Colonic mucosa (tissue), 4 donors: ENCODE measurements at regions of chr5 and their contacts with region 1.

Region 1: GRCh38 chr5:90529194-90529938 is at the start of gene LYSMD3:
- DNase-seq: peak; percentile 98
- H3K4me3 ChIP-seq: peak within 1 kb of the TSS; percentile 75
- H3K27ac ChIP-seq: peak within 1 kb of the TSS; percentile 84
- H3K4me1 ChIP-seq: peaks cover 18% of the 10 kb centered on the region
- H3K27me3 ChIP-seq: no peaks in the 10 kb centered on the region
- CTCF ChIP-seq: no peak
- total RNA-seq, gene LYSMD3: 20.4 to 32.0 TPM

Region 2: DNA sequence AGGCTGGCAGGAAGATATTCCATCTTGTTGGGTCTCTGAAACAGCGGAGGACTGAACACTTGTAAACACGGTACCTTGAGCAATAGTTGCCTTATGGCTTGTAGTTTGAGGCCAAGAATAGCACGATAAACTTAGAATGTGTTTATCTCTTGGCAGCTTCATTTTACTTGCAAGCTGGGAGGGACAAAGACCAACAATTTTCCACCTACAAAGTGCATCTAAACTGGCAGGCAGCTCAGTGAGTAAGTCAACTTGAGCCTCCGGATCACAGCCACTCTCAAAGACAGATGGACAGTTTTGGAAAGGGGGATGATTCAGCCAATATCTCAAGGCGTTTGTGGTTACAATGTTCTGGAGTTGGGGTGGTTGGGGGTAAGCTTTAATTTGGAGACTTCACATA is 772.4 kb before region 1 on chr5:
- intact Hi-C with region 1: no loop called
- DNase-seq: no peak
- H3K4me3 ChIP-seq: no peak overlapping the region
- H3K27ac ChIP-seq: no peak overlapping the region
- H3K4me1 ChIP-seq: no peaks in the 10 kb centered on the region
- H3K27me3 ChIP-seq: no peaks in the 10 kb centered on the region
- CTCF ChIP-seq: no peak

Region 3: GRCh38 chr5:90438100-90438499 is 91.3 kb before region 1 on chr5:
- intact Hi-C with region 1: loop called (anchors 2 kb)
- DNase-seq: no peak
- H3K4me3 ChIP-seq: no peak overlapping the region
- H3K27ac ChIP-seq: no peak overlapping the region
- H3K4me1 ChIP-seq: no peaks in the 10 kb centered on the region
- H3K27me3 ChIP-seq: no peaks in the 10 kb centered on the region
- CTCF ChIP-seq: no peak

Region 4: DNA sequence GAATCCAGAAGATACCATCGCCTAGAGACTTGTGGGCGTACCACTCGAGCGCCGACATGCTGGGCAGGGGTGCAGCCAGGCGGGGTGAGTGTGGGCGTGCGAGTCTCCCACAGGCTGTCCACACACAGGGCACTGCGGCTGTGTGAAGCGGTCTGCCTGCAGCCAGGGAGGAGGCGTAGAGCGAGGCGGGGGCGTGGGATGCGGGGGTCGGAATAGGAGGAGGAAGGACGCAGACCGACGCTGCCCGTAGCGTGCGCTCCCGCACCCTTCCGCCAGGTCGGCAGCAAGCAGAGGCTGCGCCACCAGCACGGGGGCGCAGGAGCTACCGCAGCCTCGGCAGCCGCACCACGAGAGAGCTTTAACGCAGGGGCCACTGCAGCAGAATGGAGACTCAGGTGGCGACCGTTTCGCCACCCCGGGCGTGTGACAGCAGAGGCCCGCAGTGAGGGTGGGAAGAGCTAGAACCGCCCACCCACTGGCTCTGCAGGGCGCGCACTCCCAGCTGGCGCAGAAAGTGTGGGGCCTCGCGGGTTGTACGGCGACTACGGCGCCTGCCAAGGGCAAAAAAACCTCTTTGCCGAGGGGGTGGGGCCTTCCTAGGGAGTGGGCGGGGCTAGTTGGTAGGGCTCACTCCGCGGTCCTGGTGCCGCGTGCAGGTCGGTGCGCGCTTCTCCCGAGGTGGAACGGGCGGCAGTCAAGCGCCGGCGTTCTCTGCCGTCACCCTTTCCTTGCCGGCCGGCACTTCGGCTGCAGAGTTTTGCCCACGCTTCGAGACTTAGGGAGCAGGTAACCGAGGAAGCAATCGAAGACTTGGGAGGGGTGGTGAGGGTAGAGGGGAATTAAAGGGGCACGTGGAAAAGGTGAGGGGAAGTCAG is 54.9 kb before region 1 on chr5 and contains the starts of genes MBLAC2 and POLR3G:
- intact Hi-C with region 1: loop called (anchors 5 kb)
- DNase-seq: peak; percentile 96
- H3K4me3 ChIP-seq: peak within 1 kb of the TSS; percentile 63
- H3K27ac ChIP-seq: peak within 1 kb of the TSS; percentile 93
- H3K4me1 ChIP-seq: no peaks in the 10 kb centered on the region
- H3K27me3 ChIP-seq: no peaks in the 10 kb centered on the region
- CTCF ChIP-seq: peak; percentile 34
- total RNA-seq, gene MBLAC2: 3.2 to 3.3 TPM
- total RNA-seq, gene POLR3G: 1.7 to 4.0 TPM

Region 5: GRCh38 chr5:92332039-92332438 is 1802.7 kb after region 1 on chr5:
- intact Hi-C with region 1: no loop called
- DNase-seq: no peak
- H3K4me3 ChIP-seq: no peak overlapping the region
- H3K27ac ChIP-seq: no peak overlapping the region
- H3K4me1 ChIP-seq: no peaks in the 10 kb centered on the region
- H3K27me3 ChIP-seq: no peaks in the 10 kb centered on the region
- CTCF ChIP-seq: no peak